Kidney (tissue), 22 donors: ENCODE measurements at regions of chr11 and their contacts with region 1.

Region 1: GRCh38 chr11:6443269-6444003 is 2.6 kb upstream of the HPX start:
- DNase-seq: peak in 4 of 5 donors; percentile 35 to 79 (median 60)
- H3K4me3 ChIP-seq: no peak overlapping the region
- H3K27ac ChIP-seq: no peak overlapping the region
- H3K4me1 ChIP-seq: peaks cover 0 to 4% (median 0%) of the 10 kb centered on the region in 3 donors
- H3K27me3 ChIP-seq: no peaks in the 10 kb centered on the region
- CTCF ChIP-seq: peak; percentile 69

Region 2: GRCh38 chr11:6229911-6230310 is 213.5 kb before region 1 on chr11:
- intact Hi-C with region 1: no loop called
- DNase-seq: no peak
- H3K4me3 ChIP-seq: peak overlapping the region in 2 of 3 donors; percentile 4 to 32
- H3K27ac ChIP-seq: peak overlapping the region in 1 of 2 donors; percentile 29
- H3K4me1 ChIP-seq: peaks cover 0 to 13% (median 7%) of the 10 kb centered on the region in 3 donors
- H3K27me3 ChIP-seq: no peaks in the 10 kb centered on the region
- CTCF ChIP-seq: no peak

Region 3: GRCh38 chr11:6377902-6378639 is 65.4 kb before region 1 on chr11:
- intact Hi-C with region 1: loop called (anchors 5 kb)
- DNase-seq: no peak
- H3K4me3 ChIP-seq: no peak overlapping the region
- H3K27ac ChIP-seq: no peak overlapping the region
- H3K4me1 ChIP-seq: no peaks in the 10 kb centered on the region
- H3K27me3 ChIP-seq: no peaks in the 10 kb centered on the region
- CTCF ChIP-seq: no peak

Region 4: GRCh38 chr11:6389921-6390724 is 53.3 kb before region 1 on chr11 and contains the start of gene SMPD1:
- intact Hi-C with region 1: no loop called
- DNase-seq: peak; percentile 91 to 98 (median 94)
- H3K4me3 ChIP-seq: peak within 1 kb of the TSS; percentile 66 to 94 (median 82)
- H3K27ac ChIP-seq: peak within 1 kb of the TSS; percentile 81 to 94
- H3K4me1 ChIP-seq: peaks cover 6 to 11% (median 8%) of the 10 kb centered on the region in 3 donors
- H3K27me3 ChIP-seq: no peaks in the 10 kb centered on the region
- CTCF ChIP-seq: no peak
- total RNA-seq, gene SMPD1: 76.0 TPM

Region 5: GRCh38 chr11:6612213-6613041 is 169.0 kb after region 1 on chr11 and contains the start of gene TAF10:
- intact Hi-C with region 1: no loop called
- DNase-seq: peak; percentile 97 to 100 (median 97)
- H3K4me3 ChIP-seq: peak within 1 kb of the TSS; percentile 78 to 87 (median 84)
- H3K27ac ChIP-seq: peak within 1 kb of the TSS; percentile 94 to 100
- H3K4me1 ChIP-seq: peaks cover 0 to 22% (median 18%) of the 10 kb centered on the region in 3 donors
- H3K27me3 ChIP-seq: no peaks in the 10 kb centered on the region
- CTCF ChIP-seq: peak; percentile 21
- total RNA-seq, gene TAF10: 136 TPM